Transverse colon (tissue), 4 donors: ENCODE measurements at regions of chr11 and their contacts with region 1.

Region 1: GRCh38 chr11:74748211-74749127 is at the start of gene RNF169:
- DNase-seq: peak; percentile 94
- H3K4me3 ChIP-seq: peak within 1 kb of the TSS; percentile 97 to 99 (median 98)
- H3K27ac ChIP-seq: peak within 1 kb of the TSS; percentile 96 to 99 (median 98)
- H3K4me1 ChIP-seq: peaks cover 13 to 39% (median 18%) of the 10 kb centered on the region in 4 donors
- H3K27me3 ChIP-seq: no peaks in the 10 kb centered on the region
- CTCF ChIP-seq: no peak
- EP300 ChIP-seq: no peak
- POLR2A ChIP-seq: peak; percentile 74
- total RNA-seq, gene RNF169: 15.1 to 22.4 (median 16.6) TPM

Region 2: DNA sequence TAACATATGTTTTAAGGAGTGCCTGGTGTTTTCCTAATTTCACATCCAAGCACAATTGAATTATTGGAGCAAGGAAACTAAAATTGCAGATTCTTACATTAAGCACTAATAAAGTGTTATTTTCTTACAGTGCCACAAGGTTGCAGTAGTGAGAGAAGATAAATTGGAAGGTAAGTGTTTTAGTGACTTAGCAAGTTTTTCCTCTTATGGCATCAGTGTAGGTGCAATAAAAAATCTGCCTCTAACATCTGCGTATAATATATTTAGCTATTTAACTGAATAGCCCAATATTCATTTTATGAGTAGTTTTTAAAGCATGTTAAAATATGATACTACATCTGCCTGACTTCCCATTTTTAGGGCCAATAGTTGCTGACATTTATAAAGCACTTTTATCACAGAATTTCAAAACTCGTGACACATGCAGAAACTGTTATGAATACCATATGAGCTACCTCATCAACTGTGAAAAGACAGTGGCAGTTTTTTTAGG is 137.1 kb before region 1 on chr11:
- in situ Hi-C with region 1: loop called in 1 of 4 experiments (anchors 25 kb)
- intact Hi-C with region 1: no loop called
- DNase-seq: no peak
- H3K4me3 ChIP-seq: no peak overlapping the region
- H3K27ac ChIP-seq: peak overlapping the region; percentile 60 to 76 (median 72)
- H3K4me1 ChIP-seq: peaks cover 0 to 20% (median 2%) of the 10 kb centered on the region in 4 donors
- H3K27me3 ChIP-seq: no peaks in the 10 kb centered on the region
- CTCF ChIP-seq: peak; percentile 34 to 65 (median 46)
- EP300 ChIP-seq: no peak
- POLR2A ChIP-seq: no peak